Activated naive CD4-positive, alpha-beta T cell treated with anti-CD3 and anti-CD28 coated beads, Interleukin-2, amount 10 ng/mL, durations not matched to agents 7 days and 5 days (primary cell): ENCODE measurements at regions of chr1 and their contacts with region 1.

Region 1: GRCh38 chr1:201119206-201120197 is 7.3 kb upstream of the CACNA1S start:
- DNase-seq: peak; percentile 69
- H3K4me3 Mint-ChIP-seq: no peak overlapping the region
- H3K27ac Mint-ChIP-seq: no peak overlapping the region
- H3K4me1 Mint-ChIP-seq: peaks cover 6% of the 10 kb centered on the region
- H3K27me3 Mint-ChIP-seq: peaks cover 83% of the 10 kb centered on the region

Region 2: GRCh38 chr1:201080135-201080534 is 39.4 kb before region 1 on chr1:
- CTCF ChIA-PET with region 1: interaction called, 25 read pairs
- DNase-seq: no peak
- H3K4me3 Mint-ChIP-seq: no peak overlapping the region
- H3K27ac Mint-ChIP-seq: no peak overlapping the region
- H3K4me1 Mint-ChIP-seq: no peaks in the 10 kb centered on the region
- H3K27me3 Mint-ChIP-seq: peaks cover 19% of the 10 kb centered on the region

Region 3: DNA sequence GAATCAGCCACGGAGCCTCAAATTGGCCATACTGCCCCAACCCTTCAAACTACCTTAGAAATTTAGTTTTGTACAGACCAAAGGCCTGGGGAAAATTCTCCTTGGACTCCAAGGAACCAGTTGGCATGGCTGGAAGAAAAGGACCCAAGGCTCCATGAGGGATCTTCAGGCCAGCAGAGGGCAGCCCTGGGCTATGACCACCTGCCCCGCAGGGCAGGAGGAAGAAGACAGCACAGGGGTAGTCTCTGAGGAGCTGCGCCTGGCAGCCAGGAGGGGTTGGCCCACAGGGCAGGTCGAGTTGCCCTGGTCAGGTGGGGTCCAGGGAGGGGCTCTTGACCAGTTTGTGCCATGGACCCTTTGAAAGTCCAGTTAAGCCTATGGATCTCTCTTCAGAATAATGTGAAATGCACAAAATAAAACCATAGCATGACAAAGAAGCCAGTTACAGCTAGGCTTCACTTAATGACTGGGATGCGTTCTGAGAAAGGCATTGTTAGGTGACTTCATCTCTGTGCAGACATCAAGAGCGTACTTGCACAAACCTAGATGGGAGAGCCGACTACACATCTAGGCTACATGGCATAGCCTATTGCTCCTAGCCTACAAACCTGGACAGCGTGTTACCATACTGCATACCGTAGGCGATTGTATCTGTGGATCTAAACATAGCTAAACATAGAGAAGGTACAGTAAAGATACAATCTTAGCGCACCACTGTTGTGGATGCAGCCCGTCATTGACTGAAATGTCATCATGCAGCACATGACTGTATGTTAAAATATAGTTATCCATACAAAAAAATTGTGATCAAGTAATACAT is 33.4 kb before region 1 on chr1:
- CTCF ChIA-PET with region 1: interaction called, 25 read pairs
- DNase-seq: peak; percentile 57
- H3K4me3 Mint-ChIP-seq: no peak overlapping the region
- H3K27ac Mint-ChIP-seq: no peak overlapping the region
- H3K4me1 Mint-ChIP-seq: no peaks in the 10 kb centered on the region
- H3K27me3 Mint-ChIP-seq: peaks cover 44% of the 10 kb centered on the region

Region 4: DNA sequence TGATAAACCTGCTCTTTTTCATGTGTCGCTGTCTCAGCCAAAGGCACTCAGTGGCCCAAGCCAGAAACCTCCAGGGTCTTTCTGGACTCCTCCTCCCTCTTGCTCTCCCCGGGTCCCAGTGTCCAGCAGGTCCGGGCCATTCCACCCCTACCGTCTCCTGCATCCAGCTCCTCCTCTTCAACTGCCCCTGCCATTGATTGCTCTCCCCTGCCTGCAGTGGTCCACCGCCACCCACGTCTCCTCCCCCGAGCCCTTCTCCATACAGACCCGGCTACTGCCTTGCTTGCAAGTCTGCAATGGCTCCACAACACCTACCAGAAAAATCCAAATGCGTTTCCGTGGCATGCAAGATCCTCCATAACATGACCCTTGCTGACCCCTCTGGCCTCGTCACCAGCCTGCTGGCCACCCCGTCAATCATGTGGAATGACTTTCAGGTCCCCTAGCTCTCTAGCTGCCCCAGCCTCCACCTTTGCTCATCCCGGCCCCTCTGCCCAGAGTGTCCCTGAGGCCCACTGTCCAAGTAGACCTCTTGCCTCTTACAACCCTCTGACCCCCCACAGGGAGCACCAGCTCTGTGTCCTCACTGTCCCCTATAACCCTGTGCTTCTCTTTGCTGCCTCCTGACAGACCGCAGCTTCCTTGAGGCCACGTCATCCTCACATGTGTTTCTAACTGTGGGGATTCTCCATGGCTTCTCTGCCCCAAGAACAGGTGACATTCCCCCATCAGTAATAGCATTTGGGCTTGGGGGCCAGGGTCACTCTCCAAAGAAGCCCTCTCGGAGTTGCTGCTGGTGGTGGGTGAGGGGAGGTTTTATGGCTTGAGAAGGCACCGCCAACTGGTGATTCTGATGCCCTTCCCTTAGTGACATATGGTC is 22.3 kb before region 1 on chr1:
- CTCF ChIA-PET with region 1: no interaction called
- DNase-seq: no peak
- H3K4me3 Mint-ChIP-seq: no peak overlapping the region
- H3K27ac Mint-ChIP-seq: no peak overlapping the region
- H3K4me1 Mint-ChIP-seq: no peaks in the 10 kb centered on the region
- H3K27me3 Mint-ChIP-seq: peaks cover 12% of the 10 kb centered on the region